ENCODE measurements at regions of chr14 and their contacts with region 1.

Region 1: DNA sequence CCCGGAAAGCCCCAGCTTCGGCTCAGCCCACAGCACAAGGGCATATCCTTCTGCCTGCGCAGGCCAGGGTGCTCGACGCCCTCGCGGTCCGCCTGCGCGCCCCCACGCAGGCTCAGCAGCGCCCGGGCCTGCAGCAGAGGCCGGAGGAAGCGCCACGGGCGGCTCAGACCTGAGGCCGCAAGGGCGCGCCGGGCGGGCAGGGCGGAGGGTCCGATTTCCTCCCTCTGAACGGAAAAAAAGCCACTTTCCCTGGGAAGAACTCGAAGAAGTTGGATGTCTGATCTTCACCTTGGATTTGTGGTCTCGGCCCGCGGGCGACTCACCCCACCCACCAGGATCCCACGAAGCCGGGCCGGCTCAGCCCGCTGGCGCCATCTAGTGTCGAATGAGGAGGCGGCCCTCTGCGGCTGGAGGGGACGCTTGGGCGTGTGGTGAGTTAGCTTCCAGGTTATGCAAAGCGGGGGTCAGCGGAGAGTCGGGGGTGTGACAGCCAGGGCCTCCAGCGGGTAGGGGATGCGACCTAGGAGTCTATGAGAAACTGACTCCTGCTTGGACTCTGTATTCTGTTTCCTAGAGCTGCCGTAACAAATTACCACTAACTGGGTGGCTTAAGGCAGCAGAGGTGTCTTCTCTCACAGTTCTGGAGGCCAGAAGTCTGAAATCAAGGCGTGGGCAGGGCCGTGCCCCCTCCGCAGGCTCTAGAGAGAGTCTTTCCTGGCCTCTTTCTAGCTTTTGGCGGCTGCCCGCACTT is 40.0 kb upstream of the SRSF5 start:
- DNase-seq: peak; percentile 84
- H3K4me3 Mint-ChIP-seq: peak overlapping the region; percentile 66
- H3K27ac Mint-ChIP-seq: peak overlapping the region; percentile 22
- H3K4me1 Mint-ChIP-seq: peaks cover 46% of the 10 kb centered on the region
- H3K27me3 Mint-ChIP-seq: no peaks in the 10 kb centered on the region

Region 2: GRCh38 chr14:69574263-69574953 is 152.5 kb before region 1 on chr14 and contains the start of gene CCDC177:
- CTCF ChIA-PET with region 1: interaction called, 10 read pairs
- POLR2A ChIA-PET with region 1: no interaction called
- DNase-seq: peak; percentile 77
- H3K4me3 Mint-ChIP-seq: peak within 1 kb of the TSS; percentile 62
- H3K27ac Mint-ChIP-seq: no peak within 1 kb of the TSS
- H3K4me1 Mint-ChIP-seq: peaks cover 10% of the 10 kb centered on the region
- H3K27me3 Mint-ChIP-seq: peaks cover 64% of the 10 kb centered on the region
- total RNA-seq, gene CCDC177: not detected

Region 3: DNA sequence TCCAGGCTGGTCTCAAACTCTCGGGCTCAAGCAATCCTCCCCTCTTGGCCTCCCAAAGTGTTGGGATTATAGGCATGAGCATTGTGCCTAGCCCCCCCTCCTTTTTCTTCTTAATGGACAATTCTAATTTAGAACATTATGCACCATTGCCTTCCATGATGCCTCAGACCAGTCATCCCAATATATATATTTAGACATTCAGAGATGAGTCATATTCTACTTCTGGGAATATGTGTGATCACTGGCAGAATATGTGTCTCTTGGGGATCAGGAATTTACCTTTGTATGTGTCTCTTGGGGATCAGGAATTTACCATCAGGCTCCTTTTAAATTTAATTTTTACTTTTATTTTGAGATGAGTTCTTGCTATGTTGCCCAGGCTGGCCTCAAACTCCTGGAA is 144.7 kb before region 1 on chr14:
- CTCF ChIA-PET with region 1: interaction called, 56 read pairs
- POLR2A ChIA-PET with region 1: interaction called, 3 read pairs
- DNase-seq: no peak
- H3K4me3 Mint-ChIP-seq: no peak overlapping the region
- H3K27ac Mint-ChIP-seq: no peak overlapping the region
- H3K4me1 Mint-ChIP-seq: peaks cover 7% of the 10 kb centered on the region
- H3K27me3 Mint-ChIP-seq: peaks cover 10% of the 10 kb centered on the region

Region 4: GRCh38 chr14:69708586-69709174 is 18.3 kb before region 1 on chr14:
- CTCF ChIA-PET with region 1: interaction called, 15 read pairs
- POLR2A ChIA-PET with region 1: interaction called, 3 read pairs
- DNase-seq: peak; percentile 60
- H3K4me3 Mint-ChIP-seq: no peak overlapping the region
- H3K27ac Mint-ChIP-seq: peak overlapping the region; percentile 43
- H3K4me1 Mint-ChIP-seq: peaks cover 88% of the 10 kb centered on the region
- H3K27me3 Mint-ChIP-seq: no peaks in the 10 kb centered on the region

Region 5: GRCh38 chr14:69841656-69842055 is 114.7 kb after region 1 on chr14:
- CTCF ChIA-PET with region 1: no interaction called
- POLR2A ChIA-PET with region 1: no interaction called
- DNase-seq: no peak
- H3K4me3 Mint-ChIP-seq: no peak overlapping the region
- H3K27ac Mint-ChIP-seq: no peak overlapping the region
- H3K4me1 Mint-ChIP-seq: no peaks in the 10 kb centered on the region
- H3K27me3 Mint-ChIP-seq: peaks cover 14% of the 10 kb centered on the region

Region 6: DNA sequence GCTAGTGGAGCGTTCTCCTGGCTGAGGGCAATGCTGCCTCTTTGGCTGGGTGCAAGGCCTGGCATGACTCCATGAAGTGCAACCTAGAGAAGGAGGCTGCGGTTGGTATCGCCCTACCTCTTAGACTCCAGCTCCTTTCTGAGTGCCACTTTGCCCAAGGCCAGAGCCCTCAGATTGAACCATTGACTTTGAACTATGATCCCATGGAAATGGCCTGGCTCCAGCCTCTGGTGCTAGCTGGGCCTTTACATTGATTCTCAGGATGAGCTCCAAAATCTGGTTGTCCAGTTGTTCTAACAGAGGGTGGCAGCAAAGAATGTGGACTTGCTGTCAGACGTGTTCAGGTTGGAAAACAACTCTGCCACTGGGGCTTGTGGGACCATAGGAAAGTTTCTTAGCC is 136.1 kb after region 1 on chr14:
- CTCF ChIA-PET with region 1: no interaction called
- POLR2A ChIA-PET with region 1: no interaction called
- DNase-seq: no peak
- H3K4me3 Mint-ChIP-seq: no peak overlapping the region
- H3K27ac Mint-ChIP-seq: no peak overlapping the region
- H3K4me1 Mint-ChIP-seq: no peaks in the 10 kb centered on the region
- H3K27me3 Mint-ChIP-seq: peaks cover 11% of the 10 kb centered on the region